ENCODE measurements at regions of chr15 and their contacts with region 1.

Region 1: GRCh38 chr15:76235186-76235826 is 76.0 kb downstream of the ETFA start:
- DNase-seq: peak; percentile 39 to 66
- ATAC-seq: peak; percentile 91 to 98
- H3K4me3 ChIP-seq: no peak overlapping the region
- H3K27ac ChIP-seq: no peak overlapping the region
- H3K4me1 ChIP-seq: no peaks in the 10 kb centered on the region
- CTCF ChIP-seq: peak; percentile 81
- EP300 ChIP-seq: no peak
- POLR2A ChIP-seq: no peak
- RAD21 ChIP-seq: peak; percentile 81 to 83

Region 2: GRCh38 chr15:76217029-76217428 is 18.3 kb before region 1 on chr15:
- CTCF ChIA-PET with region 1: interaction called, 12 read pairs
- POLR2A ChIA-PET with region 1: no interaction called
- DNase-seq: peak in 1 of 2 experiments; percentile 38
- ATAC-seq: peak in 1 of 2 experiments; percentile 67; a peak in 3 of 6 replicates
- H3K4me3 ChIP-seq: 0 out of 3 replicates have a peak overlapping the region, but pooled peaks have one; percentile 5
- H3K27ac ChIP-seq: peak overlapping the region in 1 of 2 experiments; percentile 29; a peak in 4 of 6 replicates
- H3K4me1 ChIP-seq: peaks cover 19% of the 10 kb centered on the region
- CTCF ChIP-seq: no peak
- EP300 ChIP-seq: no peak
- POLR2A ChIP-seq: no peak
- RAD21 ChIP-seq: no peak

Region 3: DNA sequence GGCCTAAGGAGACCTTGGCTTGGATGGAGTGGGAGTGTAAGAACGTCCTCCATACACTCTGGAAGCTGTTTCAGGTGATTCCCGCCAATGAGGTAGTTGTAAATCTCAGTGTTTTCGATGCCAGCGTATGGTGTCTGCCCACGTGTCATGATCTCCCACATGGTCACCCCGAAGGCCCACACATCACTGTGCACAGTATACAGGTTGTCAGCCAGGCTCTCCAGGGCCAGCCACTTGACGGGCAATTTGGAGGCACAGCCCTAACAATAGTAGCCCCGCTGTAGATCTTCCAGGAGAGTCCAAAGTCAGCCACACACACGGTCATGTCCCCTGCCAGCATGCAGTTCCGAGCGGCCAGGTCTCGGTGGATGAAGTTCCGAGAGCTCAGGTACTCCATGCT is 24.1 kb after region 1 on chr15:
- CTCF ChIA-PET with region 1: interaction called, 12 read pairs
- POLR2A ChIA-PET with region 1: no interaction called
- DNase-seq: no peak
- ATAC-seq: peak in 1 of 2 experiments; percentile 12; a peak in 1 of 6 replicates
- H3K4me3 ChIP-seq: no peak overlapping the region
- H3K27ac ChIP-seq: no peak overlapping the region
- H3K4me1 ChIP-seq: no peaks in the 10 kb centered on the region
- CTCF ChIP-seq: no peak
- EP300 ChIP-seq: no peak
- POLR2A ChIP-seq: no peak
- RAD21 ChIP-seq: no peak

Region 4: DNA sequence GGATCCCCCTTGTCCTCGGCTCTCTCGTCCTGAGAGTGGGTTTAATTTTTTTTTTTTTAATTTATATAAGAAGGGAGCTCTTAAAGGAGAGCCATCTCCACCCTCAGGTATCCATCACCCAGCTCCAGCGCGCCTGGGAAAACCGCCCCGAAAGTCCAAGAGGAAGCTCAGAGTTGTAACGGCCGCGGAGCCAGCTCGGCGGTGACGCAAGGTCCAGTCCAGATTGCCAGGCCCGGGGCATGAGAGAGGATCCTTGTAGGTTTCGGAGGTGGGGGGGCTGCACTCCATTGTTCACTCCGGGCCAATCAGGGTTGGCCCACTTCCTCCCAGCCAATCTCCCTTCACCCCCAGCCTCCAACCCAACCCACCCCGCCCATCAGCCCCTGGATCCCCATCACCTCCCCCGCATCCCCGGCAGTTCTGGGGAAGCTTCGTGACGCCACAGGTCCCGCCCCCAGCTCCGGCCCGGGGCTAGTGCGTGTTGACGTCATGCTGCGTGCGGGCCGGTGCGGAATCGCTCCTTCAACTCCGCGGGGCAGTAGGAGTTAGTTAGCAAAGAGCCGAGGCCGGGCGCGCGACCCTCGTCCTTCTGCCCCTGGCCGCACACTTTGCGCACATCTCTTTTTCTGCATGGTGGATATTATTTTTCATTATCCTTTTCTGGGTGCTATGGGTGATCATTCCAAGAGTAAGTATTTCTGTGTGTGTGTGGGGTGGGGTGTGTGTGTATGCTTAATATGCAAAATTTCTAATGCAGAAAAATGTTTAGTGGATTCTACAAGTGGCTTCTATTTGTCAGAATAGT is 101.2 kb after region 1 on chr15 and contains the start of gene ISL2:
- CTCF ChIA-PET with region 1: interaction called, 39 read pairs
- POLR2A ChIA-PET with region 1: interaction called, 4 read pairs
- DNase-seq: peak; percentile 99 to 100
- ATAC-seq: peak; percentile 90 to 95
- H3K4me3 ChIP-seq: peak within 1 kb of the TSS; percentile 75
- H3K27ac ChIP-seq: peak within 1 kb of the TSS; percentile 94 to 97
- H3K4me1 ChIP-seq: peaks cover 31% of the 10 kb centered on the region
- CTCF ChIP-seq: no peak
- EP300 ChIP-seq: 0 out of 5 replicates have a peak, but pooled peaks of 1 of the 2 experiments have one; percentile 9
- POLR2A ChIP-seq: peak; percentile 95
- RAD21 ChIP-seq: peak in 1 of 2 experiments; percentile 8; a peak in 2 of 5 replicates
- polyA plus RNA-seq, gene ISL2: 2.6 TPM in 2 replicates

Region 5: GRCh38 chr15:76866716-76867321 is 631.5 kb after region 1 on chr15:
- CTCF ChIA-PET with region 1: interaction called, 16 read pairs
- POLR2A ChIA-PET with region 1: interaction called, 3 read pairs
- DNase-seq: peak; percentile 18 to 52
- ATAC-seq: peak in 1 of 2 experiments; percentile 75; a peak in 4 of 6 replicates
- H3K4me3 ChIP-seq: no peak overlapping the region
- H3K27ac ChIP-seq: no peak overlapping the region
- H3K4me1 ChIP-seq: no peaks in the 10 kb centered on the region
- CTCF ChIP-seq: peak; percentile 87
- EP300 ChIP-seq: no peak
- POLR2A ChIP-seq: no peak
- RAD21 ChIP-seq: peak; percentile 83 to 91

Measured in A549 (cell line).